ENCODE measurements at regions of chr1 and their contacts with region 1.

Region 1: DNA sequence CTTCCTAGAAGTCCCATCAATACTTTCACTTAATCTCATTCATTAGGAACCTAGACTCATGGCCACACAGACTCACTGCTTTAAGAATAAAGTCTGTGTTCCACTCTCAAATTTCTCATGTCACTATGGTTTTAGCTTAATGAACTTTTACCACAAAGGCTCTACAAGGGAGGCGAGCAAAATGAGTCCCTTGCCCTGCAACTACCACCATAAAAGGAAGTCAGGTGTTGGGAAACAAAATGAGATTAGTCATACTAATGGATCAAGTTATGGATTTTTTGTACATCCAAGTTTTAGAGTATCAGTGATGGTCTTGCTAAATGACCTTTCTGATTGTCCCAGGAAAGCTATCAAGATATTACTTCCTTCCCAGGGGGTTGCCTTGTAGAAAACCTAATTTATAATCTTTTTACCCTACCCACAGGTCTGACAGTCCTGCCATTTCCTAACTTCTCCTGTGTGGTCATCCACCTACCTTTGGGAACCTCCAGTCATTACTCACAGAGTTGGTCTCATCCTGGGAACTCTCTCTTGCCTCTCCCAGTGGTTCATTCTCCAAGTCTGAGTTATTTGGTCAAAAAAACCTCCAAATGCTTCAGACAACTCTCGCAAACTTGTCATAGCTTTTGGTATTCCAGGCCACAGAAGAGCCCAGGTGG is 51.8 kb upstream of the SLC16A1 start:
- DNase-seq: no peak
- H3K4me3 ChIP-seq: no peak overlapping the region
- H3K27ac ChIP-seq: no peak overlapping the region
- H3K4me1 ChIP-seq: no peaks in the 10 kb centered on the region
- H3K27me3 ChIP-seq: no peaks in the 10 kb centered on the region
- CTCF ChIP-seq: no peak

Region 2: GRCh38 chr1:112818990-112819689 is 188.7 kb before region 1 on chr1:
- intact Hi-C with region 1: no loop called
- DNase-seq: peak; percentile 21
- H3K4me3 ChIP-seq: no peak overlapping the region
- H3K27ac ChIP-seq: no peak overlapping the region
- H3K4me1 ChIP-seq: no peaks in the 10 kb centered on the region
- H3K27me3 ChIP-seq: no peaks in the 10 kb centered on the region
- CTCF ChIP-seq: no peak

Region 3: GRCh38 chr1:112955781-112956543 is 51.9 kb before region 1 on chr1 and contains the start of gene SLC16A1:
- intact Hi-C with region 1: loop called (anchors 10 kb)
- DNase-seq: peak; percentile 90
- H3K4me3 ChIP-seq: peak within 1 kb of the TSS; percentile 66
- H3K27ac ChIP-seq: peak within 1 kb of the TSS; percentile 78
- H3K4me1 ChIP-seq: no peaks in the 10 kb centered on the region
- H3K27me3 ChIP-seq: no peaks in the 10 kb centered on the region
- CTCF ChIP-seq: peak; percentile 28
- total RNA-seq, gene SLC16A1: 71.8 to 92.4 TPM

Measured in colonic mucosa (tissue), 4 donors.